HCT116 (cell line): ENCODE measurements at regions of chr6 and their contacts with region 1.

Region 1: DNA sequence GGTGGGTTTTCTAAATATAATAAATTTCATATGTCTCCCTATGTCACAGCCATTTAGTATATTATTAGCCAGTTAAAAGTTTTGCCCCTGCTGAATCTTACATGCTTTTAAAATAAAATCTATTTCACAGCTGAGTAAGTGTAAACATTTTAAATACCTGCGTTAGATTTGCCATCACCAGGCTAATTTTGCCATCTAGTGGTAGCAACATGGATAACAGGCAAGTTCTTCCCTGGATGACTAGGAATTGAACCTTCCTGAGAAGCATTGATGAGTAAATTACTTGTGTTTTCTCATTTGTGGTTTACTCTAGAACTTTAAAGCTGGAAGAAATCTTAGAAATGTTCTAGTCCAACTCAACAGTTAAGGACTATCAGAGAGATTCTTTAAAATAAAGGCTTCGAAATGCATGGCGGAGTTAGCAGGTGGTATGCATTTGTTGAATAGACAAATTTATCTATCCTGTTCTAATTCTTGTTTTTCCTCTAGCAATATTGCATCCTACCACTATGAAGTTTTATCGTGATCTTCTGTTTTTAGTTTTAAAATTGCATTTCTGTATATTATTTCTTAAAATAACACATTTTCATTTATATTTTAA is 2.6 kb downstream of the PRSS35 start:
- DNase-seq: peak; percentile 57
- ATAC-seq: no peak
- H3K4me3 ChIP-seq: no peak overlapping the region
- H3K27ac ChIP-seq: no peak overlapping the region
- H3K4me1 ChIP-seq: peaks cover 0 to 10% of the 10 kb centered on the region in 2 experiments; a peak in 1 of 4 replicates
- H3K27me3 ChIP-seq: no peaks in the 10 kb centered on the region
- CTCF ChIP-seq: peak; percentile 77 to 92 (median 88)
- POLR2A ChIP-seq: no peak
- RAD21 ChIP-seq: peak; percentile 94

Region 2: GRCh38 chr6:82247634-82248232 is 1267.2 kb before region 1 on chr6 and contains the start of gene IBTK:
- CTCF ChIA-PET with region 1: no interaction called
- POLR2A ChIA-PET with region 1: no interaction called
- RAD21 ChIA-PET with region 1: no interaction called
- intact Hi-C with region 1: loop called (anchors 5 kb)
- DNase-seq: peak; percentile 86
- ATAC-seq: peak; percentile 80
- H3K4me3 ChIP-seq: peak within 1 kb of the TSS; percentile 86 to 90
- H3K27ac ChIP-seq: peak within 1 kb of the TSS; percentile 72
- H3K4me1 ChIP-seq: peaks cover 14 to 27% of the 10 kb centered on the region in 2 experiments
- H3K27me3 ChIP-seq: no peaks in the 10 kb centered on the region
- CTCF ChIP-seq: no peak
- POLR2A ChIP-seq: no peak
- RAD21 ChIP-seq: no peak
- total RNA-seq, gene IBTK: 36.6 TPM

Region 3: GRCh38 chr6:83215131-83216047 is 299.6 kb before region 1 on chr6:
- CTCF ChIA-PET with region 1: interaction called, 25 read pairs
- POLR2A ChIA-PET with region 1: no interaction called
- RAD21 ChIA-PET with region 1: no interaction called
- intact Hi-C with region 1: no loop called
- DNase-seq: peak; percentile 38
- ATAC-seq: peak; percentile 97
- H3K4me3 ChIP-seq: no peak overlapping the region
- H3K27ac ChIP-seq: no peak overlapping the region
- H3K4me1 ChIP-seq: no peaks in the 10 kb centered on the region
- H3K27me3 ChIP-seq: no peaks in the 10 kb centered on the region
- CTCF ChIP-seq: peak; percentile 78 to 89 (median 83)
- POLR2A ChIP-seq: no peak
- RAD21 ChIP-seq: peak; percentile 80

Region 4: DNA sequence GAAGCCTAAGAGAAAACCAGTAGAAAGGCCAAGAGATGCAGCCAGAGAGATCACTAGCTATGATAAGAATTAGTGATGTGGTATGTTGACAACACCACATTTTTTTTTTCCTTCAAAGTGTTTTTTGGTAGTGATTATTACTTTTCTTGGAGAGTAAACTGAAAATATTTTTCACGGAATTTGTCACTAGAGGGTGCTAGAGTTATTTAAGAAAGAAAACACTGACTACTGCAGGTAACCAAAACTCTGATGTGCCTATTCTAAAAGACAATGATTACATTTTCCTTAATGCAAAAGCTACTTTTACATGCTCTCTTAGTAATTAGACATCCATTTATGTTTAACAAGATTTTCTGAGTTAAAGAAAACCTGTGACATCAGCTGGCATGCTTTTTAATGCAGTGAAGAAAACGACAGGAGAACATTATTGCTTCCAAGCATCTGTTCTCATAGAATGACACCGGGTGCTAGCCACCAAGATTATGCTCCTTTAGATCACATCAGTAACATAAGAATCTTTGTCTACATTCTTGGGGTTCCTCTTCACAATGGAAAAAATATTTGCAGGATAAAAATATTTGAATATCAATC is 293.0 kb before region 1 on chr6:
- CTCF ChIA-PET with region 1: interaction called, 55 read pairs
- POLR2A ChIA-PET with region 1: no interaction called
- RAD21 ChIA-PET with region 1: interaction called in 1 of 2 experiments, 3 read pairs
- intact Hi-C with region 1: loop called (anchors 1 kb)
- DNase-seq: peak; percentile 18
- ATAC-seq: no peak
- H3K4me3 ChIP-seq: no peak overlapping the region
- H3K27ac ChIP-seq: no peak overlapping the region
- H3K4me1 ChIP-seq: peaks cover 0 to 6% of the 10 kb centered on the region in 2 experiments; a peak in 1 of 4 replicates
- H3K27me3 ChIP-seq: no peaks in the 10 kb centered on the region
- CTCF ChIP-seq: peak; percentile 30 to 67 (median 51); a peak in 5 of 6 replicates
- POLR2A ChIP-seq: no peak
- RAD21 ChIP-seq: peak; percentile 76

Region 5: GRCh38 chr6:83417880-83418663 is 96.9 kb before region 1 on chr6:
- CTCF ChIA-PET with region 1: interaction called, 36 read pairs
- POLR2A ChIA-PET with region 1: no interaction called
- RAD21 ChIA-PET with region 1: interaction called, 3 to 6 read pairs
- intact Hi-C with region 1: loop called (anchors 1 kb)
- DNase-seq: peak; percentile 35
- ATAC-seq: peak; percentile 69
- H3K4me3 ChIP-seq: no peak overlapping the region
- H3K27ac ChIP-seq: no peak overlapping the region
- H3K4me1 ChIP-seq: no peaks in the 10 kb centered on the region
- H3K27me3 ChIP-seq: no peaks in the 10 kb centered on the region
- CTCF ChIP-seq: peak; percentile 47 to 63 (median 57); a peak in 5 of 6 replicates
- POLR2A ChIP-seq: no peak
- RAD21 ChIP-seq: peak; percentile 72

Region 6: GRCh38 chr6:83758533-83758932 is 243.6 kb after region 1 on chr6:
- CTCF ChIA-PET with region 1: no interaction called
- POLR2A ChIA-PET with region 1: no interaction called
- RAD21 ChIA-PET with region 1: no interaction called
- intact Hi-C with region 1: no loop called
- DNase-seq: no peak
- ATAC-seq: no peak
- H3K4me3 ChIP-seq: no peak overlapping the region
- H3K27ac ChIP-seq: no peak overlapping the region
- H3K4me1 ChIP-seq: no peaks in the 10 kb centered on the region
- H3K27me3 ChIP-seq: no peaks in the 10 kb centered on the region
- CTCF ChIP-seq: no peak
- POLR2A ChIP-seq: no peak
- RAD21 ChIP-seq: no peak

Region 7: DNA sequence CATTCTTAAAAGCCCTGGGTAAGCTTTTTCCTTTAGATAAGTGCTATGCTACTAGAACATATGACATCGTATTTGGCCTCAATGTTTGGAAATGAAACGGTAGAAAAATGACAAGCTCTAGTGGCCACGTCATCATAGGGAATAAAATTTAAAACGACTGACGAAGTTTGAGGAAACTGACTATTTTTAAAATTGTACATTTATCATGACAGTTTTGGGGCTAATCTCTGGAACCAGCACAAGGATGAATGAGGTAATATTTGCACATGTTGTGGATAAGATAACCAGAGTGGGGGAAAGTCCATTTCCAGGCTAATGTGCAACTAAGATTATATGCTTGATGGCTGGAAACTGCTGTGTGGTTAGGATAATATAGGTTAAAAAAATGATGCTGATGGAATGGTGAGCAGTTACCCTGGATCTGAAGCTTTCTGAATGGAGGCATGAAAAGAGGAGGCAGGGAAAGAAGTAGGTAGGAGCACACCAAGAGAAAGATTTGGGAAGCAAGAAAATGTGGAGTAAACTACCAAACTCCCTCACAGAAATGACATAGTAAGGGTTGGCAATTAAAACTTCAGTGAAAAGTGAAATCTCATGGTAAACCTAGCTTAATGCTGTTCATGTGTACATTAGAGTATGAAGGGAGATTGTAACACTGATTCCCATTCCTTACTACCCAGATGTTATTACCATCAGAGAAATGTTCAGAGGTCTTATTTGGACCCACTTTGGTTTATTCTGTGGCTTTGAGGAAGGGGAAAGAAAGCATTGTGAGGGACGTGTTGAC is 755.2 kb after region 1 on chr6:
- CTCF ChIA-PET with region 1: no interaction called
- POLR2A ChIA-PET with region 1: no interaction called
- RAD21 ChIA-PET with region 1: no interaction called
- intact Hi-C with region 1: no loop called
- DNase-seq: no peak
- ATAC-seq: no peak
- H3K4me3 ChIP-seq: no peak overlapping the region
- H3K27ac ChIP-seq: no peak overlapping the region
- H3K4me1 ChIP-seq: no peaks in the 10 kb centered on the region
- H3K27me3 ChIP-seq: peaks cover 3% of the 10 kb centered on the region; the same call in 1 of the 2 replicates
- CTCF ChIP-seq: no peak
- POLR2A ChIP-seq: no peak
- RAD21 ChIP-seq: no peak